ENCODE measurements at regions of chr17 and their contacts with region 1.

Region 1: DNA sequence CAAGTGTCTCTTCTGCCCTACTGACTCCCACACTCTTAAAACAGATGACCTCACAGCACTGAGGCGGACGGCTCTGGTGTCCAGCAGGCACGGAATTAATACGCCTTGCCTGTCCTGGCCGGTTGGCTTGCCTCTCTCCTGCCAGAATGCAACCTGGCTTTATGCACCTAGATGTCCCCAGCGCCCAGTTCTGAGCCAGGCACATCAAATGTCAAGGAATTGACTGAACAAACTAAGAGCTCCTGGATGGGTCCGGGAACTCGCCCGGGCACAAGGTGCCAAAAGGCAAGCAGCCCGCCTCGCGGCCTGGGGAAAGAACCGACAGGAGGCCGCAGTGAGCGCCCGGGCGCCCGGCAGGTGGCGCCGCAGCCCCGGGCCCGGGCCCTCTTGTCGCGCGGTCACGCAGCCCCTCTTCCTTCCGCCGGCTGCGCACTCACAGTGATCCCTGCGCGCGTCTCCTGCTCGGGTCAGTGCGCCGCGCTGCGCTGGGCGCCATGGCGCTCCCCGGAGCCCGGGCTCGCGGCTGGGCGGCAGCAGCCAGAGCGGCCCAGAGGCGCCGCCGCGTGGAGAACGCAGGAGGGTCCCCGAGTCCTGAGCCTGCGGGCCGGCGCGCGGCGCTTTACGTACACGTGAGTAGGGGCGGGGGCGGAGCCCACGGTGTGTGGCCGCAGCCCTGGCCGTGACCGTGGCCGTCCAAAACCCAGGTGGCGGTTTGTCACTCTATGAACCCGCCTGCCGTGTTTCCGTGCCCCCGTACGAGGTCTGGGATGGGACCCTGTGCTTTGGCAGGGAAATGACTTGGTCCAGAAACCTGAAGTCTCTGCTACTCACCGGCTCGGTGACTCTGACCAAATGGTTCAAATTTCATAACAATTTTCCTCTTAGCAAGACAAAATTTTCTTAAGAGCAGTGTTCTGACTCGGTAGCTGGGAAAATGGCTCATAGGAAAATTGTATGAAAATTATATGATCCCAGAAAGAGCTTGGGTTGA is at the start of gene RSAD1:
- H3K4me3 Mint-ChIP-seq: peak within 1 kb of the TSS; percentile 73
- H3K27ac Mint-ChIP-seq: peak within 1 kb of the TSS; percentile 87
- H3K4me1 Mint-ChIP-seq: peaks cover 31% of the 10 kb centered on the region
- H3K27me3 Mint-ChIP-seq: no peaks in the 10 kb centered on the region

Region 2: GRCh38 chr17:50361561-50362480 is 116.9 kb before region 1 on chr17:
- intact Hi-C with region 1: loop called (anchors 5 kb)
- H3K4me3 Mint-ChIP-seq: no peak overlapping the region
- H3K27ac Mint-ChIP-seq: no peak overlapping the region
- H3K4me1 Mint-ChIP-seq: peaks cover 9% of the 10 kb centered on the region
- H3K27me3 Mint-ChIP-seq: no peaks in the 10 kb centered on the region

Region 3: DNA sequence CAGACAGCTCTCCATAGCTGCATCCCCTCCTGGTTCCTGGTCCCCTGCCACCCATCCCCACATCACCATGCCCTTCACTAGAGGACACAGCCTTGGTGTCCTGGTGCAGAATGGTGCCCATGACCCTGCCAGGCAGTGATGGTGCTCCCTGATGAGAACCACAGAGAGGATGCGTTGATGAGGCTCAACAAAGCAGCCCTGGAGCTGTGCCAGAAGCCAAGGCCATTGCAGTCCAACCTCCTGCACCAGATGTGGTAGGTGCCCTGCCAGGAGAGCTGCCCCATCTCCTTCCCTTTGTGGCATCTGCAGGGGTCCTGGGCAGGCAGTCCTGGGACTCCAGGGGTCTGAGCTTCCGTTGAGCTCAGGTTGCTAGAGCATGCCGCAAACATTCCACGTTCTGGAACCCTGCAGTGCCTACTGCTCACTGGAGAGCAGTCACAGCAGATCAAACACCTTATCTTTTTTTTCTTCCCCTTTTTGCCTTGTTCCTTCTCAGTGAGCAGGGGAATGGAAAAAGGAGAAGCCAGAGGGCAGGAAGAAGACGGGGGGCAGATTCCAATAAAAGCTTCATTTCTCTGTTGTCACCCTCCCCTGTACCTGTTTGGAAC is 48.6 kb after region 1 on chr17:
- intact Hi-C with region 1: no loop called
- H3K4me3 Mint-ChIP-seq: no peak overlapping the region
- H3K27ac Mint-ChIP-seq: no peak overlapping the region
- H3K4me1 Mint-ChIP-seq: peaks cover 18% of the 10 kb centered on the region
- H3K27me3 Mint-ChIP-seq: peaks cover 26% of the 10 kb centered on the region

Region 4: DNA sequence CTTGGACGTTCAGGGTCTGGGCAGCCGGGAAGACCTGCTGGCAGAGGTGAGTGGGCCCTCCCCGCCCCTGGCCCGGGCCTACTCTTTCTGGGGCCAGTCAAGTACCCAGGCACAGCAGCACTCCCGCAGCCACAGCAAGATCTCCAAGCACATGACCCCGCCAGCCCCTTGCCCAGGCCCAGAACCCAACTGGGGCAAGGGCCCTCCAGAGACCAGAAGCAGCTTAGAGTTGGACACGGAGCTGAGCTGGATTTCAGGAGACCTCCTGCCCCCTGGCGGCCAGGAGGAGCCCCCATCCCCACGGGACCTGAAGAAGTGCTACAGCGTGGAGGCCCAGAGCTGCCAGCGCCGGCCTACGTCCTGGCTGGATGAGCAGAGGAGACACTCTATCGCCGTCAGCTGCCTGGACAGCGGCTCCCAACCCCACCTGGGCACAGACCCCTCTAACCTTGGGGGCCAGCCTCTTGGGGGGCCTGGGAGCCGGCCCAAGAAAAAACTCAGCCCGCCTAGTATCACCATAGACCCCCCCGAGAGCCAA is 147.4 kb after region 1 on chr17:
- intact Hi-C with region 1: loop called (anchors 5 kb)
- H3K4me3 Mint-ChIP-seq: no peak overlapping the region
- H3K27ac Mint-ChIP-seq: no peak overlapping the region
- H3K4me1 Mint-ChIP-seq: peaks cover 82% of the 10 kb centered on the region
- H3K27me3 Mint-ChIP-seq: peaks cover 49% of the 10 kb centered on the region

Region 5: GRCh38 chr17:50689956-50690886 is 211.5 kb after region 1 on chr17:
- intact Hi-C with region 1: loop called (anchors 10 kb)
- H3K4me3 Mint-ChIP-seq: no peak overlapping the region
- H3K27ac Mint-ChIP-seq: no peak overlapping the region
- H3K4me1 Mint-ChIP-seq: peaks cover 13% of the 10 kb centered on the region
- H3K27me3 Mint-ChIP-seq: no peaks in the 10 kb centered on the region

Measured in dendritic cell treated with granulocyte-macrophage colony-stimulating factor and Interleukin-4, amounts not matched to agents 40 ng/mL and 50 ng/mL, for 4 days (primary cell).